Activated CD4-positive, alpha-beta T cell treated with anti-CD3 and anti-CD28 coated beads for 36 hours (primary cell): ENCODE measurements at regions of chr2 and their contacts with region 1.

Region 1: DNA sequence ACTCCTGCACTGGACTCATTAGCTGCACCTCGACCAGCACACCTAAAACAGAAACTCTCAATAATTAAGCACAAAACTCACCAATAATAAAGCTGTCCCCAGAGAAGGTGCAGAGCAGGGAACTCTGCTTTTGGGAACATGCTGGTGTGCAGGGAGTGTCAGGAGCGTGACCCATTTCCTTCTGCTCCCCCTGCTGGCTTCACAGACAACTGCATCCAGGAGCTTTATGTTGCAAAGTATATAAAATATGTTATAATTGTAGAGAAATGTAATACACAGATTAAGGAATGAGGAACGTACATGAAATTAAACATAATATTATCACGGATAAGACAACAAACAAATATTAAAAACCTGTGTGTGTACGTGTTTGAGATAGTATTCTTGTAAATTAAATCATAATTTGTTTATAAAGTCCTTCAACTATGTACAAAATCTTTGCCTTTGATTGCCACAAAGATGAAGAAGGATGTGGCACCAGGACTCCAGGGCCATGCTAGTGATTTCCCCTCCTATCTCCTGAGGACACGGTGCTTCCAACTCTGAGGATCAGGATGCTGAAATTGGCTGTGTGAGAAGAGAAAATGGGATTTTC is 68.6 kb upstream of the MAL start:
- DNase-seq: peak; percentile 63
- ATAC-seq: no peak
- H3K4me3 Mint-ChIP-seq: no peak overlapping the region
- H3K27ac Mint-ChIP-seq: no peak overlapping the region
- H3K4me1 Mint-ChIP-seq: no peaks in the 10 kb centered on the region
- H3K27me3 Mint-ChIP-seq: peaks cover 28% of the 10 kb centered on the region

Region 2: GRCh38 chr2:94874277-94875008 is 82.5 kb before region 1 on chr2:
- CTCF ChIA-PET with region 1: interaction called, 9 read pairs
- POLR2A ChIA-PET with region 1: interaction called, 4 read pairs
- intact Hi-C with region 1: loop called (anchors 1 to 2 kb)
- DNase-seq: peak; percentile 81
- ATAC-seq: peak; percentile 72
- H3K4me3 Mint-ChIP-seq: no peak overlapping the region
- H3K27ac Mint-ChIP-seq: no peak overlapping the region
- H3K4me1 Mint-ChIP-seq: no peaks in the 10 kb centered on the region
- H3K27me3 Mint-ChIP-seq: peaks cover 17% of the 10 kb centered on the region

Region 3: GRCh38 chr2:94986392-94986963 is 29.6 kb after region 1 on chr2:
- CTCF ChIA-PET with region 1: interaction called, 10 read pairs
- POLR2A ChIA-PET with region 1: interaction called, 4 read pairs
- intact Hi-C with region 1: no loop called
- DNase-seq: peak; percentile 70
- ATAC-seq: peak; percentile 55
- H3K4me3 Mint-ChIP-seq: no peak overlapping the region
- H3K27ac Mint-ChIP-seq: no peak overlapping the region
- H3K4me1 Mint-ChIP-seq: no peaks in the 10 kb centered on the region
- H3K27me3 Mint-ChIP-seq: peaks cover 3% of the 10 kb centered on the region